Activated naive CD4-positive, alpha-beta T cell treated with anti-CD3 and anti-CD28 coated beads for 36 hours (primary cell): ENCODE measurements at regions of chr16 and their contacts with region 1.

Region 1: GRCh38 chr16:24516900-24517669 is 22.3 kb upstream of the RBBP6 start:
- DNase-seq: peak; percentile 91
- H3K4me3 Mint-ChIP-seq: peak overlapping the region; percentile 46
- H3K27ac Mint-ChIP-seq: peak overlapping the region; percentile 36
- H3K4me1 Mint-ChIP-seq: peaks cover 4% of the 10 kb centered on the region
- H3K27me3 Mint-ChIP-seq: no peaks in the 10 kb centered on the region

Region 2: DNA sequence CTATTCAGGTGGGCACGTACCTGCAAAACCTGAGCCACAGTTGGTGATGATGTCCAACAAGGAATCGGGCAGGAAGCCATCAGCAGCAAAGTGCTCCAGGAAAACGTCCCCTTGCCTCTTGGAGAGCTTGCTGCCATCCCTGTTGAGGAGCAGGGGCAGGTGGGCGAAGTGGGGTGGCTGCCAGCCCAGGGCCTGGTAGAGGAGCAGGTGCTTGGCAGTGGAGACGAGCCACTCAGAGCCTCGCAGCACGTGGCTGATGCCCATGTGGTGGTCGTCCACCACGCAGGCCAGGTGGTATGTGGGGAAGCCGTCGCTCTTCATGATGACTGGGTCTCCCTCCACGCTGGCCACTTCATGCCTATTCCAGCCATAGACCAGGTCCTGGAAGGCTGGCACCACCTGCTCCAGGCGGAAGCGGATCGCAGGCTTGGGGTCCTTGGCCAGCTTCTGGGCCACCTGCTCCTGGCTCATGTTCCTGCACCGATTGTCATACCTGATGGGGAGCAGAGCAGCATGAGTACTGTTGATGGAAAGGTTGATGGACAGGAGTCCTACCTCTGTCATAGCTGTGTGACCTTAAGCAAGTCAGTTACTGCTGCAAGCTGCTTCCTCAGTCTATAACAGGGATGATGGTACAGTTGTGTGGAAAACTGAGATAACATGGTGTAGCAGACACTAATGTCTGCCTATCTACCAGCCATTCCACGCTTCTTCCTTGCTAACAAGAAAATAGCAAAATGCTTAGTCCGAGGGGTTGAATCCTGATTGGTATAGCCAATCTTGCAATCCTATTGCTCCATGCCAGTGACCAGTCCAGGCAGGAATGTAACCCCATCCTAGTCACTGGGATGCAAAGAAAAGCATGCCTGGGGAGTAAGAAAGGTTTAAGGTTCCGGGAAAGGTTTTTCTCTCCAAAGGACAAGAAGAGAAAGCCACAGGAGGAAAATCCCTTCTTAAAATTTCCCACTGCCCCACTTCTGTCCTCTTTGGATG is 981.9 kb before region 1 on chr16:
- CTCF ChIA-PET with region 1: no interaction called
- intact Hi-C with region 1: no loop called
- DNase-seq: no peak
- H3K4me3 Mint-ChIP-seq: no peak overlapping the region
- H3K27ac Mint-ChIP-seq: no peak overlapping the region
- H3K4me1 Mint-ChIP-seq: peaks cover 7% of the 10 kb centered on the region
- H3K27me3 Mint-ChIP-seq: no peaks in the 10 kb centered on the region

Region 3: DNA sequence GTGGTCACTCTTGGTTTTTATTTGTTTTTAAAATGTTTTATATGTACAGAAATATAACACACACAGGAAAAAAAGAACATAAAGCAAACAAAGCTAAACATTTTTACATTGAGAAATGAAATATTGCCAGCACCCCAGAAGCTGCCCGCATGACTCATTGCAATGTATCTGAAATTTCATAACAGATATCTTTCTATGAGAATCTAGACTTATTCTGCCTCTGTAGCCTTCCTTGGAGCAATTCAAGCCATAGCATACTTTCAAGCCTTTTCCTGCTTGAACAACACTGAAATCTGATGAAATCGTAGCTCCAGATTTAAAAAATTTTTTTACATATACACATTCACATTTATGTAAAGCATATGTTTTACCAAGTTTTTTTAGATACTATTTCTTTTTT is 109.2 kb after region 1 on chr16:
- CTCF ChIA-PET with region 1: no interaction called
- intact Hi-C with region 1: no loop called
- DNase-seq: no peak
- H3K4me3 Mint-ChIP-seq: no peak overlapping the region
- H3K27ac Mint-ChIP-seq: no peak overlapping the region
- H3K4me1 Mint-ChIP-seq: no peaks in the 10 kb centered on the region
- H3K27me3 Mint-ChIP-seq: peaks cover 3% of the 10 kb centered on the region

Region 4: GRCh38 chr16:24689145-24689544 is 172.1 kb after region 1 on chr16:
- CTCF ChIA-PET with region 1: no interaction called
- intact Hi-C with region 1: loop called (anchors 1 kb)
- DNase-seq: peak; percentile 39
- H3K4me3 Mint-ChIP-seq: no peak overlapping the region
- H3K27ac Mint-ChIP-seq: no peak overlapping the region
- H3K4me1 Mint-ChIP-seq: peaks cover 4% of the 10 kb centered on the region
- H3K27me3 Mint-ChIP-seq: peaks cover 13% of the 10 kb centered on the region

Region 5: GRCh38 chr16:24906199-24907020 is 389.3 kb after region 1 on chr16:
- CTCF ChIA-PET with region 1: interaction called, 4 read pairs
- intact Hi-C with region 1: loop called (anchors 5 kb)
- DNase-seq: no peak
- H3K4me3 Mint-ChIP-seq: no peak overlapping the region
- H3K27ac Mint-ChIP-seq: no peak overlapping the region
- H3K4me1 Mint-ChIP-seq: peaks cover 3% of the 10 kb centered on the region
- H3K27me3 Mint-ChIP-seq: no peaks in the 10 kb centered on the region

Region 6: DNA sequence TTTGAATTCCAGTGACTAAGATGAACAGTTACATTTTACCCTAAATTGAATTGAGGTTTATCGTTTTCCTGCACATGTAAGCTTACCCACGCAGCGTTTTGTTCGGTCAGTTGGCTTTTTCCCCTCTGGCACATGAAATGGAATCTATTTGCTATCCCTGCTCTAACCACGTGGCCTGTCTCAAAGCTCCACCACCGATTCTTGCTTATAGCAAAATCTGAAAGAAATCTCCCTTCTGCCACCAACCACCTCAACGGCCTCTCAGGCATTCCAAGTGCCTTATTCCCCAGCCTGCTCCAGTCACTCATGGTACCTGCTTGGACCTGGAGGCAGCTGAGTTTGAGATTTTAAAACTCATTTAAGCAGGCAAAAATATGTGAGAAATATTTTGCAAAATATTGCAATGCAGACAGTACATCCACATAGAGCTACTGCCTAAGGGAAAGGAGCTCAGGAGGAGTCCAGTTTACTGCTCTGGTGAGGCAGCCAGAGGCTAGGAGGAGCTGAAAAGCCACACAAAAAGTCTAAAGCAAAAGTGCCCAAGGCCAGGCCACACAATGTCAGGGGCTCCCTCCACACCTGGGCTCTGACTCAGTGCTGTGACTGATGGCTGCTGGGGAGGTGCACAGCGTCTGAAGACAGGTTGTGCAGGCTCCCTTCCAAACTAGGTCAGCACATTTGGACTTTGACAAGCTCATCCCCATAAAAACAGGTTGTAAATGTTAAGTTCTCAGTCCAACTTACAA is 471.7 kb after region 1 on chr16:
- CTCF ChIA-PET with region 1: no interaction called
- intact Hi-C with region 1: no loop called
- DNase-seq: peak; percentile 55
- H3K4me3 Mint-ChIP-seq: no peak overlapping the region
- H3K27ac Mint-ChIP-seq: no peak overlapping the region
- H3K4me1 Mint-ChIP-seq: peaks cover 76% of the 10 kb centered on the region
- H3K27me3 Mint-ChIP-seq: no peaks in the 10 kb centered on the region